ENCODE measurements at regions of chr3 and their contacts with region 1.

Region 1: GRCh38 chr3:43162230-43163084 is 56.6 kb upstream of the POMGNT2 start:
- DNase-seq: no peak
- ATAC-seq: peak; percentile 63
- H3K4me3 ChIP-seq: no peak overlapping the region
- H3K27ac ChIP-seq: no peak overlapping the region
- H3K4me1 ChIP-seq: no peaks in the 10 kb centered on the region
- H3K27me3 ChIP-seq: no peaks in the 10 kb centered on the region
- CTCF ChIP-seq: peak; percentile 8 to 69 (median 49); a peak in 4 of 6 replicates
- POLR2A ChIP-seq: no peak
- RAD21 ChIP-seq: peak; percentile 77

Region 2: GRCh38 chr3:42914771-42915515 is 247.5 kb before region 1 on chr3:
- CTCF ChIA-PET with region 1: no interaction called
- POLR2A ChIA-PET with region 1: no interaction called
- RAD21 ChIA-PET with region 1: no interaction called
- intact Hi-C with region 1: no loop called
- DNase-seq: no peak
- ATAC-seq: no peak
- H3K4me3 ChIP-seq: no peak overlapping the region
- H3K27ac ChIP-seq: no peak overlapping the region
- H3K4me1 ChIP-seq: no peaks in the 10 kb centered on the region
- H3K27me3 ChIP-seq: no peaks in the 10 kb centered on the region
- CTCF ChIP-seq: no peak
- POLR2A ChIP-seq: no peak
- RAD21 ChIP-seq: no peak

Region 3: GRCh38 chr3:43378066-43378935 is 215.8 kb after region 1 on chr3:
- CTCF ChIA-PET with region 1: interaction called, 3 read pairs
- POLR2A ChIA-PET with region 1: no interaction called
- RAD21 ChIA-PET with region 1: no interaction called
- intact Hi-C with region 1: loop called (anchors 1 kb)
- DNase-seq: peak; percentile 39
- ATAC-seq: peak; percentile 95
- H3K4me3 ChIP-seq: no peak overlapping the region
- H3K27ac ChIP-seq: no peak overlapping the region
- H3K4me1 ChIP-seq: no peaks in the 10 kb centered on the region
- H3K27me3 ChIP-seq: no peaks in the 10 kb centered on the region
- CTCF ChIP-seq: peak; percentile 57 to 81 (median 72); a peak in 5 of 6 replicates
- POLR2A ChIP-seq: no peak
- RAD21 ChIP-seq: peak; percentile 74

Region 4: DNA sequence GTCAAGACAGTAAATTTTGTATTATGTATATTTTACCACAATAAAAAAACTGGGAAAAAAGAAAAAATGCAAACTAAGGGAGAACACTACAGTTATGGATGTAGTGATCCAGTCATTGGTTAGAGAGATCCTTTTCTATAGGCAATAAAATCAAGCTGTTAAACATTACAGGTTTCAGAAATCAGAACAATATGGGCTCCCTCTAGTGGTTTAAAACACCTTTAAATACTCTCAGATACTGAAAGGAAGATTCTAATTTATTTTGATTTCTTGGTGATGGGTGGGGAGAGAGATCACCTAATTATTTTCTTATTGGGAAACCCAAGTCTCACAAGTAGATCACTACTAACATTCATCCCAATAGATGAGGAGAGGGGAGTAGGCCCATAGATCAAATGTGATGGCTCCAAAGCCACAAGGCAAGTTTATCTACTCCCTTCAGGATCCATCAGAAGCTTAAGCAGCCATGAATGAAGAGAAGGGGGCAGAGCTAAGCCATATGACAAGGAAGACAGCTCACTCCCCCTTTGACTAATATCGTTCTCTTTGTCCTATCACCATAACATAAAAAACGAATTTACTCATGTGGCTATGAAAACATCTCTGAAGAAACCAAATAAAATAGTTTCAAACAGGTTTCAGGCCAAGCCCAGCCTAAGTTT is 340.7 kb after region 1 on chr3:
- CTCF ChIA-PET with region 1: interaction called, 8 read pairs
- POLR2A ChIA-PET with region 1: no interaction called
- RAD21 ChIA-PET with region 1: no interaction called
- intact Hi-C with region 1: loop called (anchors 5 kb)
- DNase-seq: peak; percentile 12
- ATAC-seq: peak; percentile 72
- H3K4me3 ChIP-seq: no peak overlapping the region
- H3K27ac ChIP-seq: no peak overlapping the region
- H3K4me1 ChIP-seq: no peaks in the 10 kb centered on the region
- H3K27me3 ChIP-seq: no peaks in the 10 kb centered on the region
- CTCF ChIP-seq: peak; percentile 39 to 65 (median 56); a peak in 4 of 6 replicates
- POLR2A ChIP-seq: no peak
- RAD21 ChIP-seq: peak; percentile 68

Region 5: GRCh38 chr3:43638594-43639447 is 476.4 kb after region 1 on chr3:
- CTCF ChIA-PET with region 1: no interaction called
- POLR2A ChIA-PET with region 1: no interaction called
- RAD21 ChIA-PET with region 1: no interaction called
- intact Hi-C with region 1: loop called (anchors 5 kb)
- DNase-seq: peak; percentile 58
- ATAC-seq: peak; percentile 85
- H3K4me3 ChIP-seq: peak overlapping the region; percentile 2 to 36; a peak in 3 of 4 replicates
- H3K27ac ChIP-seq: peak overlapping the region; percentile 40
- H3K4me1 ChIP-seq: peaks cover 12 to 21% of the 10 kb centered on the region in 2 experiments
- H3K27me3 ChIP-seq: no peaks in the 10 kb centered on the region
- CTCF ChIP-seq: peak; percentile 53 to 72 (median 64); a peak in 5 of 6 replicates
- POLR2A ChIP-seq: no peak
- RAD21 ChIP-seq: peak; percentile 80